IMR-90 (cell line): ENCODE measurements at regions of chr4 and their contacts with region 1.

Region 1: GRCh38 chr4:177809791-177810190 is 367.6 kb upstream of the AGA start:
- DNase-seq: no peak
- ATAC-seq: no peak
- H3K4me3 ChIP-seq: no peak overlapping the region
- H3K27ac ChIP-seq: no peak overlapping the region
- H3K4me1 ChIP-seq: no peaks in the 10 kb centered on the region
- H3K27me3 ChIP-seq: no peaks in the 10 kb centered on the region
- CTCF ChIP-seq: no peak
- POLR2A ChIP-seq: no peak
- RAD21 ChIP-seq: no peak

Region 2: GRCh38 chr4:177796841-177797240 is 12.9 kb before region 1 on chr4:
- CTCF ChIA-PET with region 1: interaction called, 3 read pairs
- POLR2A ChIA-PET with region 1: interaction called, 10 read pairs
- dilution Hi-C with region 1: no loop called
- in situ Hi-C with region 1: no loop called
- intact Hi-C with region 1: no loop called
- DNase-seq: no peak
- ATAC-seq: no peak
- H3K4me3 ChIP-seq: no peak overlapping the region
- H3K27ac ChIP-seq: no peak overlapping the region
- H3K4me1 ChIP-seq: no peaks in the 10 kb centered on the region
- H3K27me3 ChIP-seq: no peaks in the 10 kb centered on the region
- CTCF ChIP-seq: no peak
- POLR2A ChIP-seq: no peak
- RAD21 ChIP-seq: no peak